ENCODE measurements at regions of chr11 and their contacts with region 1.

Region 1: GRCh38 chr11:27392278-27393114 is 29.5 kb upstream of the CCDC34 start:
- DNase-seq: peak; percentile 51 to 67
- H3K4me3 ChIP-seq: no peak overlapping the region
- H3K4me3 Mint-ChIP-seq: peak overlapping the region; percentile 22
- H3K27ac Mint-ChIP-seq: peak overlapping the region; percentile 97
- H3K4me1 ChIP-seq: peaks cover 92% of the 10 kb centered on the region
- H3K4me1 Mint-ChIP-seq: peaks cover 56% of the 10 kb centered on the region
- H3K27me3 ChIP-seq: no peaks in the 10 kb centered on the region
- H3K27me3 Mint-ChIP-seq: no peaks in the 10 kb centered on the region
- CTCF ChIP-seq: no peak

Region 2: GRCh38 chr11:27201454-27202236 is 190.9 kb before region 1 on chr11:
- CTCF ChIA-PET with region 1: no interaction called
- POLR2A ChIA-PET with region 1: no interaction called
- intact Hi-C with region 1: loop called (anchors 5 kb)
- DNase-seq: peak; percentile 89 to 94
- H3K4me3 ChIP-seq: no peak overlapping the region
- H3K4me3 Mint-ChIP-seq: peak overlapping the region; percentile 63
- H3K27ac Mint-ChIP-seq: peak overlapping the region; percentile 87
- H3K4me1 ChIP-seq: peaks cover 42% of the 10 kb centered on the region
- H3K4me1 Mint-ChIP-seq: peaks cover 48% of the 10 kb centered on the region
- H3K27me3 ChIP-seq: no peaks in the 10 kb centered on the region
- H3K27me3 Mint-ChIP-seq: no peaks in the 10 kb centered on the region
- CTCF ChIP-seq: no peak

Region 3: GRCh38 chr11:27331981-27332380 is 60.5 kb before region 1 on chr11:
- CTCF ChIA-PET with region 1: no interaction called
- POLR2A ChIA-PET with region 1: no interaction called
- intact Hi-C with region 1: loop called (anchors 2 kb)
- DNase-seq: no peak
- H3K4me3 ChIP-seq: no peak overlapping the region
- H3K4me3 Mint-ChIP-seq: no peak overlapping the region
- H3K27ac Mint-ChIP-seq: peak overlapping the region; percentile 23
- H3K4me1 ChIP-seq: peaks cover 28% of the 10 kb centered on the region
- H3K4me1 Mint-ChIP-seq: peaks cover 36% of the 10 kb centered on the region
- H3K27me3 ChIP-seq: no peaks in the 10 kb centered on the region
- H3K27me3 Mint-ChIP-seq: no peaks in the 10 kb centered on the region
- CTCF ChIP-seq: no peak

Region 4: GRCh38 chr11:27362749-27363575 is 29.5 kb before region 1 on chr11 and contains the start of gene CCDC34:
- CTCF ChIA-PET with region 1: no interaction called
- POLR2A ChIA-PET with region 1: interaction called, 5 read pairs
- intact Hi-C with region 1: loop called (anchors 1 kb)
- DNase-seq: peak; percentile 93 to 95
- H3K4me3 ChIP-seq: peak within 1 kb of the TSS; percentile 80
- H3K4me3 Mint-ChIP-seq: peak within 1 kb of the TSS; percentile 94
- H3K27ac Mint-ChIP-seq: peak within 1 kb of the TSS; percentile 91
- H3K4me1 ChIP-seq: peaks cover 13% of the 10 kb centered on the region
- H3K4me1 Mint-ChIP-seq: peaks cover 36% of the 10 kb centered on the region
- H3K27me3 ChIP-seq: no peaks in the 10 kb centered on the region
- H3K27me3 Mint-ChIP-seq: no peaks in the 10 kb centered on the region
- CTCF ChIP-seq: no peak
- total RNA-seq, gene CCDC34: 25.0 and 25.7 TPM in 2 replicates

Region 5: GRCh38 chr11:27373856-27374602 is 18.5 kb before region 1 on chr11:
- CTCF ChIA-PET with region 1: interaction called, 10 read pairs
- POLR2A ChIA-PET with region 1: interaction called, 7 read pairs
- intact Hi-C with region 1: loop called (anchors 1 kb)
- DNase-seq: peak in 1 of 2 experiments; percentile 51
- H3K4me3 ChIP-seq: no peak overlapping the region
- H3K4me3 Mint-ChIP-seq: peak overlapping the region; percentile 42
- H3K27ac Mint-ChIP-seq: peak overlapping the region; percentile 69
- H3K4me1 ChIP-seq: peaks cover 34% of the 10 kb centered on the region
- H3K4me1 Mint-ChIP-seq: peaks cover 39% of the 10 kb centered on the region
- H3K27me3 ChIP-seq: no peaks in the 10 kb centered on the region
- H3K27me3 Mint-ChIP-seq: no peaks in the 10 kb centered on the region
- CTCF ChIP-seq: no peak

Region 6: GRCh38 chr11:27423125-27423524 is 30.6 kb after region 1 on chr11:
- CTCF ChIA-PET with region 1: no interaction called
- POLR2A ChIA-PET with region 1: interaction called, 4 read pairs
- intact Hi-C with region 1: loop called (anchors 2 kb)
- DNase-seq: no peak
- H3K4me3 ChIP-seq: no peak overlapping the region
- H3K4me3 Mint-ChIP-seq: no peak overlapping the region
- H3K27ac Mint-ChIP-seq: peak overlapping the region; percentile 30
- H3K4me1 ChIP-seq: peaks cover 17% of the 10 kb centered on the region
- H3K4me1 Mint-ChIP-seq: peaks cover 27% of the 10 kb centered on the region
- H3K27me3 ChIP-seq: no peaks in the 10 kb centered on the region
- H3K27me3 Mint-ChIP-seq: no peaks in the 10 kb centered on the region
- CTCF ChIP-seq: no peak

Region 7: GRCh38 chr11:27443746-27444507 is 51.4 kb after region 1 on chr11:
- CTCF ChIA-PET with region 1: no interaction called
- POLR2A ChIA-PET with region 1: no interaction called
- intact Hi-C with region 1: loop called (anchors 2 kb)
- DNase-seq: no peak
- H3K4me3 ChIP-seq: no peak overlapping the region
- H3K4me3 Mint-ChIP-seq: no peak overlapping the region
- H3K27ac Mint-ChIP-seq: no peak overlapping the region
- H3K4me1 ChIP-seq: no peaks in the 10 kb centered on the region
- H3K4me1 Mint-ChIP-seq: peaks cover 12% of the 10 kb centered on the region
- H3K27me3 ChIP-seq: no peaks in the 10 kb centered on the region
- H3K27me3 Mint-ChIP-seq: no peaks in the 10 kb centered on the region
- CTCF ChIP-seq: no peak

Region 8: GRCh38 chr11:27698872-27699474 is 306.5 kb after region 1 on chr11:
- CTCF ChIA-PET with region 1: no interaction called
- POLR2A ChIA-PET with region 1: no interaction called
- intact Hi-C with region 1: no loop called
- DNase-seq: peak; percentile 89 to 91
- H3K4me3 ChIP-seq: peak overlapping the region; percentile 70
- H3K4me3 Mint-ChIP-seq: peak overlapping the region; percentile 90
- H3K27ac Mint-ChIP-seq: peak overlapping the region; percentile 74
- H3K4me1 ChIP-seq: peaks cover 17% of the 10 kb centered on the region
- H3K4me1 Mint-ChIP-seq: peaks cover 20% of the 10 kb centered on the region
- H3K27me3 ChIP-seq: no peaks in the 10 kb centered on the region
- H3K27me3 Mint-ChIP-seq: no peaks in the 10 kb centered on the region
- CTCF ChIP-seq: peak; percentile 87 to 97

Measured in Caco-2 (cell line).